Mammary epithelial cell (primary cell): ENCODE measurements at regions of chr12 and their contacts with region 1.

Region 1: DNA sequence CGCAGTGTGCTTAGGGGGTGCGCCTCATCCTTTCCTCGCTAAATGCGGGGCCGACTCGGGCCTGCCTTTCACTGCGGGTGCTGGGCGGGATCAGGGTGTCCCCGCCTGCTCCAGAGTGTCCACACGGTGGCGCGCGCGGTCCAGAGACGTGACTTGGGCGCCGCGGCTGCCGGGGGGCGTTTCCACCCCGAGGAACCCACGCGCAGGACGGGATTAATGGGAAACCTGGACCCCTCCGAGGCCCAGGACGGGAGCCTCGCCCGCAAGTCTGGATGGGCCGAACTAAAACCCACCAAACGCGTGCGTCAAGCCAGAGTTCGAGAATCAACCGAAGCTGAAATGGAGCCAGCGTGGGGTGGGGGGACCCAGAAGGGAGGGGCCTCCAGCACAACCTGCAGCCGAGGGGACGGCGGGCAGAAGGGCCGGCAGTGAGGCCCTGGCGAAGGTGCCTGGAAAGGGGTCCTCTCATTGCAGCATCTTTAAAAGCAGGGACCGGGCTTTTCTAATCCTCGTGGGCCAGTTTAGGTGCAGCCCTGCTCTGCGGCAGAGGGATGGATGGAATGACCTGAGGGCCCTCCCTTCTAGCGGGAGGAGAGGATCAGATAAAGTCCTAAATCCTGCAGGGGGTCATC is 93.3 kb downstream of the NINJ2 start:
- DNase-seq: peak; percentile 77
- H3K4me3 ChIP-seq: peak overlapping the region; percentile 48 to 84 (median 59)
- H3K27ac ChIP-seq: peak overlapping the region; percentile 91
- H3K4me1 ChIP-seq: peaks cover 32% of the 10 kb centered on the region
- H3K27me3 ChIP-seq: no peaks in the 10 kb centered on the region
- CTCF ChIP-seq: peak; percentile 71 to 89

Region 2: DNA sequence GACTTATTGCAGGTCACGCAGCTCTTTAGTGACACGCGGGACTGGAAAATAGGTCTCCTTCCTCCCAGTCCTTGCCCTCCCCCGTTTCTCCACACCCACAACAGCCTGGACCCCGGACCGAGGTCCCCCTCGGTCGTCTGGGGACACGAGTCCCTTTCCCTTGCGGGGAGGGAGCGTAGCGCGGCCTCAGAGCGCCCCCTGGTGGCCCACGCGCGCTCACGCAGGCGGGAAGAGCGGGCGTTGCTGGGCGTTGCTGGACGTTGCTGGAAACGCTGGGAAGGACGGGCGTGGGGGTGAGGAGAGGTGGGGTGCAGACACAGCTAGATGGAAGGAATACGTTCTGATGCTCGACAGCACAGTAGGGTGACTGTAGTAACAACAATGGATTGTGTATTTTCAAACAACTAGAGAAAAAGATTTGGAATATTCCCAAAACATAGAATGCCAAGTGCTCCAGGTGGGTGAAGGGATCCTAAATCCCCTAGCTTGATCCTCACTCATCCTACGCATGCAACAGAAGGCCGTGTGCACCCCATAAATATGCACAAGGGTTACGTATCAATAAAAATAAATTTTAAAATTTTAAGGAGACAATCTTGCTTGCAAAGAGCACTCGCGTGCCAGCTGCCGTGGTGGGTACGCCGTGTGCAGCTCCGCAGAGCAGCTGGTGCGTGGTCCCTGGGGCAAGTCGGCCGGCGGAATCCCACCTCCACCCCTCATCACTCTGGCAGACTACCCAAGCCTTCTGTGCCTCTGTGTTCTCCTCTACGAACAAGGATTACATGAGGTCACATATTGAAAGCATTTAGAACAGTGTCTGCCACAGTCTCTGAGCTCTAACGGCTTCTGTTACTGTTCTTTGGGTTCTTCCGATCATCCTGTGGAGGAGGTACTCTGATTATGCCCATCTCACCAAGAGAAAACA is 22.7 kb before region 1 on chr12:
- CTCF ChIA-PET with region 1: no interaction called
- dilution Hi-C with region 1: no loop called
- in situ Hi-C with region 1: no loop called
- intact Hi-C with region 1: no loop called
- DNase-seq: peak; percentile 27
- H3K4me3 ChIP-seq: no peak overlapping the region
- H3K27ac ChIP-seq: no peak overlapping the region
- H3K4me1 ChIP-seq: no peaks in the 10 kb centered on the region
- H3K27me3 ChIP-seq: no peaks in the 10 kb centered on the region
- CTCF ChIP-seq: peak; percentile 77 to 99

Region 3: GRCh38 chr12:614411-614970 is 44.6 kb after region 1 on chr12:
- CTCF ChIA-PET with region 1: interaction called, 6 read pairs
- dilution Hi-C with region 1: loop called (anchors 5 kb)
- in situ Hi-C with region 1: no loop called
- intact Hi-C with region 1: no loop called
- DNase-seq: no peak
- H3K4me3 ChIP-seq: no peak overlapping the region
- H3K27ac ChIP-seq: no peak overlapping the region
- H3K4me1 ChIP-seq: peaks cover 8% of the 10 kb centered on the region
- H3K27me3 ChIP-seq: no peaks in the 10 kb centered on the region
- CTCF ChIP-seq: no peak

Region 4: GRCh38 chr12:810671-811415 is 240.9 kb after region 1 on chr12:
- CTCF ChIA-PET with region 1: no interaction called
- dilution Hi-C with region 1: loop called (anchors 5 kb)
- in situ Hi-C with region 1: loop called (anchors 5 kb)
- intact Hi-C with region 1: loop called (anchors 1 kb)
- DNase-seq: no peak
- H3K4me3 ChIP-seq: no peak overlapping the region
- H3K27ac ChIP-seq: no peak overlapping the region
- H3K4me1 ChIP-seq: no peaks in the 10 kb centered on the region
- H3K27me3 ChIP-seq: no peaks in the 10 kb centered on the region
- CTCF ChIP-seq: no peak

Region 5: DNA sequence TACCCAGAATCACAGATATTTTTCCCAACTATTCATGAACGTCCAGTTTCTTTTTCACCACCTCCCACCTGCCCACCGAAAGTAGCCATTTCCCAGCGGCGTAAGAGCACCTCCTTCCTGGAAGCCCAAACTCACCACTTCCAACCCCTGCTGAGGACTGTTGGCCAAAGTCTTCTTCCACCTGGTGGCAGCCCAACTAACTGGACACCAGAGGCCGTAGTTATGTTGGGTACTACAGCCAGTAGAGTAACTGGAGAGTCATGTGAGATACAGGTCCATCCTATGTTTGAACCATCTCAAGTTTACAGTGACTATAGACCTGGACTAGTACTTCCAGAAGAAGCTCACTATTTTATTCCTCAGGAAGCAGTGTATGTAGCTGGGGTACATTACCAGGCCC is 298.0 kb after region 1 on chr12:
- CTCF ChIA-PET with region 1: no interaction called
- dilution Hi-C with region 1: no loop called
- in situ Hi-C with region 1: no loop called
- intact Hi-C with region 1: no loop called
- DNase-seq: no peak
- H3K4me3 ChIP-seq: no peak overlapping the region
- H3K27ac ChIP-seq: no peak overlapping the region
- H3K4me1 ChIP-seq: no peaks in the 10 kb centered on the region
- H3K27me3 ChIP-seq: no peaks in the 10 kb centered on the region
- CTCF ChIP-seq: peak in 1 of 2 donors; percentile 1

Region 6: GRCh38 chr12:949453-950191 is 379.7 kb after region 1 on chr12 and contains the start of gene RAD52:
- CTCF ChIA-PET with region 1: no interaction called
- dilution Hi-C with region 1: no loop called
- in situ Hi-C with region 1: loop called (anchors 10 to 25 kb)
- intact Hi-C with region 1: loop called (anchors 1 kb)
- DNase-seq: peak; percentile 98
- H3K4me3 ChIP-seq: peak within 1 kb of the TSS; percentile 56 to 89 (median 68)
- H3K27ac ChIP-seq: peak within 1 kb of the TSS; percentile 62
- H3K4me1 ChIP-seq: peaks cover 18% of the 10 kb centered on the region
- H3K27me3 ChIP-seq: no peaks in the 10 kb centered on the region
- CTCF ChIP-seq: peak; percentile 64 to 93
- total RNA-seq, gene RAD52: 11.7 to 16.5 TPM

Region 7: DNA sequence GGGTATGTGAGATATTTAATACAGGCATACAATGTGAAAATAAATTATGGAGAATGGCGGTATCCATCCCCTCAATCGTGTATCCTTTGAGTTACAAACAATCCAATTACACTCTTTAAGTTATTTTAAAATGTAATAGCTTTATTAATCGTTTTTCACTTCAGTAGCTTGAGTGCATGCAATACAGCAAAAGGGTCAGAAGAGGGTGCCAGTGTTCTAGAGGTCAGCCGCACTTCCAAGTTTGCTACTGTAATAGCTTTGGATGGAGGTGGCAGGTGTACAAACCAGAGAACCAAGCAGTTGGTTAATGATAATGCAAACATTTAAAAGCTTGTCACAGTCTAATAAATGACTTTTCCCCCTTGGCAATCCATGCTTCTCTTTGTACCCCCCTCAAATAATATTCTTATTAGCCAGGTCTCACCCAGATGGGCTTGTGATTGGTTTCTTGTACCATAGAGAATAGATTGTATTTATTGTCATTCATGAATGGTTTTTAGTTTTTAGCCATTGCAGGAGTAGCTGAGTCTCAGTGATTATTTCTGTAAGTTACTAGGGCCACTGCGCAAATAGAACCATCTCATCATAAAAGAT is 548.1 kb after region 1 on chr12:
- CTCF ChIA-PET with region 1: interaction called, 4 read pairs
- dilution Hi-C with region 1: no loop called
- in situ Hi-C with region 1: no loop called
- intact Hi-C with region 1: loop called (anchors 1 kb)
- DNase-seq: peak; percentile 53
- H3K4me3 ChIP-seq: no peak overlapping the region
- H3K27ac ChIP-seq: no peak overlapping the region
- H3K4me1 ChIP-seq: peaks cover 33% of the 10 kb centered on the region
- H3K27me3 ChIP-seq: no peaks in the 10 kb centered on the region
- CTCF ChIP-seq: peak; percentile 79 to 88

Region 8: DNA sequence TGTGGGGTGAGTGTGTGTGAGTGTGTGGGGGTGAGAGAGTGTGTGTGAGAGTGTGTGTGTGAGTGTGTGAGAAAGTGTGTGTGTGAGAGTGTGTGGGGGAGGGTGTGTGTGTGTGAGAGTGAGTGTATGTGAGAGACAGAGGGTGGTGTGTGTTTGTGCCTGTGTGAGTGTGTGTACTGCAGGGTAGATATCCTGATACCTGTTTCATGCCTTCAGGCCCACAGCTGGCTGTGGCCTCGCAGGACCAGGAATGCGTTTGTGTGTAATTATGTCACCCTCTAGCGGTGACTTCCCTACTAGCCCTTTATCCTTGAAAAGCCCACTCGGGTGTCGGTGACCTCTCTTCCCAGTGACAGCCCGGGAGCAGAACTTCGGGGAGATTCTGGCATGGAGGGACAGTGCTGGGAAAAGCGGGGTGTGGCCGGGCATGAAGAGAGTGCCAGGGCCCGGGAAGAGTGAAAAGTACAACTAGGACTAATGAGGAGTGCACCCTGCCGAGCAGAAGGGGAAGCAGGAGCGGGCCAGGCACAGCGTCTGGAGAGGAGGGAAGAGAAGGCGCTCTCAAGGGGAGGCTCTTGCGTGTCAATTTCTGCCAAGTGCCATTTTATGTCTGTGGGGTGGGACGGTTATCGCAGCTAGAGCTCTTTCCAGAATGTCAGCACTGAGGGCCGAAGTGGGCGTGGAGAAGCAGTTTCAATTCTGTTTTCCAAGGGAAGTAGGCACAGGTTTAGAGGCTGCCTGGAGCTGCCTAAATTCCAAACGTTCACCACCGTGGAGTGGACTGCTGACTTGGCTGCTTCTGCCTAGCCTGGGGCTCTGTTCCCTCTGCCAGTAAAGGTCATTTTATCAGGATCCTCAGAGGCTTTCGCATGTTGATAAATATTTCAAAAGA is 1035.5 kb after region 1 on chr12:
- CTCF ChIA-PET with region 1: no interaction called
- dilution Hi-C with region 1: no loop called
- in situ Hi-C with region 1: no loop called
- intact Hi-C with region 1: loop called (anchors 1 kb)
- DNase-seq: peak; percentile 77
- H3K4me3 ChIP-seq: peak overlapping the region; percentile 30 to 47 (median 41)
- H3K27ac ChIP-seq: peak overlapping the region; percentile 61
- H3K4me1 ChIP-seq: peaks cover 23% of the 10 kb centered on the region
- H3K27me3 ChIP-seq: no peaks in the 10 kb centered on the region
- CTCF ChIP-seq: peak; percentile 70 to 80